Dorsolateral prefrontal cortex (tissue), 120 donors: ENCODE measurements at regions of chr11 and their contacts with region 1.

Region 1: DNA sequence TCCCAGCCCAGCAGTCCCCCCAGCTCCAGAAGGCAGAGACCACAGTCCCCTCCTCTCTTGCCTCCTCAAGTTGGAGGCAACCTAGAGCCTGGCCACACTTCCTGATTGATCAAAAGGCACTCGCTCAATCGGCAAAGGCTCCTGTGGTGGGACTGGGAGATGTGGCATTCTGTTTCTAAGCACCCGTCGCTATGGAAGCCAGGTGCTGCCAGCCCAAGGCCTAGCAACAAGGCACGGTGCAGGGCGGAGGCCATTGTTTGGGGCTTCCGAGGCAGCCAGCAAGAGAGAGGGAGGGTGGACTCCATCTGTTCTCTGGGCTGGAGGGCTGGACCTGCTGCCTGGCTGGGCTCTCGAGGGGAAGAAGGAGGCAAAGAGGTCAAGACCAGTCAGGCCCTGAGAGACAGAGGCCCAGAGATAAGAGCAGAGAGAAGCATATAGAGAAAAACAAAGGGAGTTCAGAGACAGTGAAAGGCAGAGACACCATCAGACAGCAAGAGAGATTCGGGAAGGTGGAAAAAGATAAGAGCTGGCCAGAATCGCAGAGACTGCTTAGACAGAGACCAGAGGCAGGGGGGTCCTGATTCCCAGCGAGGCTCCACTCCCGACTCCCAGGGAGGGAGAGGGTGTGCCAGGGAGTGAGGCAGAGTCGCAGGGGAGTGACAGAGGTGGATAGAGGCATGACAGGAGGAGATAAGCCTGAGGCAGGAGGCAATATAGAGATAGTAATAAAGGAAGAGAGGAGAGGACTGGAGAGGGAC is 21.2 kb downstream of the PDE2A start:
- DNase-seq: peak in 1 of 10 donors; percentile 26
- H3K4me3 ChIP-seq: no peak overlapping the region
- H3K27ac ChIP-seq: peak overlapping the region in 29 of 59 donors; percentile 0 to 65 (median 35)
- H3K27me3 ChIP-seq: no peaks in the 10 kb centered on the region
- CTCF ChIP-seq: no peak

Region 2: GRCh38 chr11:72705442-72706365 is 52.7 kb after region 1 on chr11:
- intact Hi-C with region 1: loop called in 1 of 2 experiments (anchors 5 kb)
- DNase-seq: no peak
- H3K4me3 ChIP-seq: no peak overlapping the region
- H3K27ac ChIP-seq: peak overlapping the region in 1 of 59 donors; percentile 27
- H3K27me3 ChIP-seq: no peaks in the 10 kb centered on the region
- CTCF ChIP-seq: no peak